ENCODE measurements at regions of chr14 and their contacts with region 1.

Region 1: GRCh38 chr14:101964297-101965144 is at the start of gene DYNC1H1:
- DNase-seq: peak; percentile 95
- ATAC-seq: peak; percentile 93
- H3K4me3 ChIP-seq: peak within 1 kb of the TSS; percentile 99
- H3K27ac ChIP-seq: peak within 1 kb of the TSS; percentile 95
- H3K4me1 ChIP-seq: peaks cover 28% of the 10 kb centered on the region
- H3K27me3 ChIP-seq: no peaks in the 10 kb centered on the region
- CTCF ChIP-seq: no peak
- total RNA-seq, gene DYNC1H1: 432 TPM

Region 2: DNA sequence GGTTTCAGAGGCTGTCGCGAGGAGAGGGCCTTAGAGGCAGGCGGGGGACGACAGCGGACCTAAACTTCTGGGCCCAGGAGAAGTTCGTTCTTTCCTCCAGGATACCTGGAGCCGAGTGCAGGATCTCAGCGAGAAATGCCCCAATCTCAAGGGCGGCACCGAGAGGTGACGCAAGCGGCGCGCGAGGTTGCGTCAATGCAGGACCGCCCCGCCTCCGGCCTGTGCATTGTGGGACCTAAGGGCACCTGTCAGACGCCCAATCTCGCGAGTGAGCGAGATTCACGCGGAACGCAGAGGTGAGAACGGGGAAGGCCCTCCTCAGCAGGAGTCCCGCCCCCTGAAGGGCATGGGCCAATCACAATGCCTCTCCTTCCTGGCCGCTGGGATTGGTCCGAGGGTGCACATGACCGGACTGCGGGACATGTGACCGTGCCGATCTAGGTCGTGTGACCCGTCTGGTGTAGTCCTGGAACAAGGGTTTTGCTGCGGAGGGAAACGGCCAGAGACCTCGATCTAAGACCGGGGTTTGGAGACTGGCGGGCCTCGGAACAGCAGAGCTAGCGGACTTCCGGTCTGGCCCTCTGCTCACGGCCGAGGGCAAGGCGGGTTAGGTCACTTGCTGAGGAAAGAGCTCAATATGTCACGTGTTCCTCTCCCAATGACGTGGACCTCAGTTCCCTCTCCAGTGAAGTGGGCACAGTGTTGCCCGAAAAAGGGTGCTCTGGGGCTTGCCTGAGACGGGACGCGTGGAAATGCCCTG is 16.4 kb before region 1 on chr14:
- intact Hi-C with region 1: no loop called
- DNase-seq: peak; percentile 100
- ATAC-seq: peak; percentile 98
- H3K4me3 ChIP-seq: peak overlapping the region; percentile 93
- H3K27ac ChIP-seq: peak overlapping the region; percentile 98
- H3K4me1 ChIP-seq: peaks cover 7% of the 10 kb centered on the region
- H3K27me3 ChIP-seq: no peaks in the 10 kb centered on the region
- CTCF ChIP-seq: no peak

Region 3: GRCh38 chr14:102096214-102097114 is 131.9 kb after region 1 on chr14:
- intact Hi-C with region 1: loop called (anchors 10 kb)
- DNase-seq: peak; percentile 87
- ATAC-seq: peak; percentile 89
- H3K4me3 ChIP-seq: no peak overlapping the region
- H3K27ac ChIP-seq: no peak overlapping the region
- H3K4me1 ChIP-seq: peaks cover 4% of the 10 kb centered on the region
- H3K27me3 ChIP-seq: no peaks in the 10 kb centered on the region
- CTCF ChIP-seq: peak; percentile 81

Region 4: GRCh38 chr14:102116361-102117070 is 152.0 kb after region 1 on chr14:
- intact Hi-C with region 1: no loop called
- DNase-seq: peak; percentile 45
- ATAC-seq: peak; percentile 25
- H3K4me3 ChIP-seq: no peak overlapping the region
- H3K27ac ChIP-seq: no peak overlapping the region
- H3K4me1 ChIP-seq: no peaks in the 10 kb centered on the region
- H3K27me3 ChIP-seq: no peaks in the 10 kb centered on the region
- CTCF ChIP-seq: no peak